CD8-positive, alpha-beta T cell (primary cell): ENCODE measurements at regions of chr4 and their contacts with region 1.

Region 1: GRCh38 chr4:157992038-157992705 is 180.7 kb downstream of the GASK1B start:
- DNase-seq: peak in 3 of 9 experiments; percentile 7 to 54 (median 44)
- ATAC-seq: no peak
- H3K4me3 ChIP-seq: no peak overlapping the region
- H3K4me3 Mint-ChIP-seq: no peak overlapping the region
- H3K27ac ChIP-seq: no peak overlapping the region
- H3K27ac Mint-ChIP-seq: no peak overlapping the region
- H3K4me1 ChIP-seq: no peaks in the 10 kb centered on the region
- H3K4me1 Mint-ChIP-seq: no peaks in the 10 kb centered on the region
- H3K27me3 ChIP-seq: no peaks in the 10 kb centered on the region
- H3K27me3 Mint-ChIP-seq: peaks cover 2% of the 10 kb centered on the region
- CTCF ChIP-seq: peak; percentile 56

Region 2: DNA sequence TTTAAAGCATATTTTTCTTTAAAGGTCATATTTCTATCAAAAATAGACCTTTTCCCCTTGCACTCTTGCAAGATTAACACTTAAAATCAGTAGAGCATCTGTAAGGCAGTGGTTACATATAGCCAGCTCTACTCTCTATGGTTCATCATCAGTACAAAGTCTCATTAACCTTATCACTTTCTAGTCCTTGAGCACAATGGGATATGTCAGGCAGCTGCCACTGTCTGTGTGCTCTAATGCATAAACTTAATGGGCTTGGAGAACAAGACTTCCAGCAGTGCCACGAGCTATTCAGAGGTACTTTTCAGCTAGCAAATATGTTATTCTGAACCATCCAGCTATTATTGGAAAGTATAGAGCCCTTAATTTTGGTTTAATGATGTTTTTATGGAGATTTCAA is 213.1 kb before region 1 on chr4:
- CTCF ChIA-PET with region 1: no interaction called
- POLR2A ChIA-PET with region 1: no interaction called
- intact Hi-C with region 1: no loop called
- DNase-seq: no peak
- ATAC-seq: no peak
- H3K4me3 ChIP-seq: no peak overlapping the region
- H3K4me3 Mint-ChIP-seq: no peak overlapping the region
- H3K27ac ChIP-seq: no peak overlapping the region
- H3K27ac Mint-ChIP-seq: no peak overlapping the region
- H3K4me1 ChIP-seq: no peaks in the 10 kb centered on the region
- H3K4me1 Mint-ChIP-seq: no peaks in the 10 kb centered on the region
- H3K27me3 ChIP-seq: no peaks in the 10 kb centered on the region
- H3K27me3 Mint-ChIP-seq: no peaks in the 10 kb centered on the region
- CTCF ChIP-seq: no peak

Region 3: DNA sequence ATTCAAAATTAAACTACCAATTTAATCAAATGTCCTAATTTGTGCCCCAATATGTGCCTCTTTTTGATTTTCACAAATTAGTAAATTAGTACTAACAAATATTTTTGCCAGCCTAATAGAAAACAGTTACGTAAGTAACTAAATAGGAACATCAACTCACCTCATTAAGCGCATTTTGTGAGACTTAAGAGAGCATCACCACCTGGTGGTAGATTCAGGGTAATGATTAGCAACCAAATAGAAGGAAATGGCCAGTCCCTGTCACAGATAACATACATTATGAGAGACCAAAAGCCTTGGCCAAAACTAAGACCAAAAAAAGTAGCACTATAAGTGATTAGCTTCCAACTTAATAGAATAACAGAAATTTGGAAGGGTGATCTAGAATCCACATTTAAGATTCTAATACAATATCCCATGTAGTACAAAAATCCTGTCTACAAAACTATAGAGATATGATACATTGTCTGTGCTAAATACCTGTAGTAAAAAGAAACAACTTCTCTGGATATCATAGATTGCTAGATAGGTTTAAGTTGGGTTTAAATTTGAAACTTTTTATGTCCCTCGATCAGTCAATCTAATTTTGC is 632.8 kb after region 1 on chr4:
- CTCF ChIA-PET with region 1: no interaction called
- POLR2A ChIA-PET with region 1: no interaction called
- intact Hi-C with region 1: loop called in 1 of 2 experiments (anchors 5 kb)
- DNase-seq: peak in 2 of 9 experiments; percentile 31 to 42
- ATAC-seq: no peak
- H3K4me3 ChIP-seq: no peak overlapping the region
- H3K4me3 Mint-ChIP-seq: no peak overlapping the region
- H3K27ac ChIP-seq: no peak overlapping the region
- H3K27ac Mint-ChIP-seq: no peak overlapping the region
- H3K4me1 ChIP-seq: no peaks in the 10 kb centered on the region
- H3K4me1 Mint-ChIP-seq: no peaks in the 10 kb centered on the region
- H3K27me3 ChIP-seq: no peaks in the 10 kb centered on the region
- H3K27me3 Mint-ChIP-seq: peaks cover 11% of the 10 kb centered on the region
- CTCF ChIP-seq: peak; percentile 44

Region 4: GRCh38 chr4:158850800-158851644 is 858.9 kb after region 1 on chr4:
- CTCF ChIA-PET with region 1: no interaction called
- POLR2A ChIA-PET with region 1: no interaction called
- intact Hi-C with region 1: loop called in 1 of 2 experiments (anchors 5 kb)
- DNase-seq: peak in 2 of 9 experiments; percentile 38 to 55
- ATAC-seq: peak; percentile 38
- H3K4me3 ChIP-seq: no peak overlapping the region
- H3K4me3 Mint-ChIP-seq: no peak overlapping the region
- H3K27ac ChIP-seq: no peak overlapping the region
- H3K27ac Mint-ChIP-seq: no peak overlapping the region
- H3K4me1 ChIP-seq: no peaks in the 10 kb centered on the region
- H3K4me1 Mint-ChIP-seq: peaks cover 5% of the 10 kb centered on the region
- H3K27me3 ChIP-seq: no peaks in the 10 kb centered on the region
- H3K27me3 Mint-ChIP-seq: no peaks in the 10 kb centered on the region
- CTCF ChIP-seq: peak; percentile 74

Region 5: DNA sequence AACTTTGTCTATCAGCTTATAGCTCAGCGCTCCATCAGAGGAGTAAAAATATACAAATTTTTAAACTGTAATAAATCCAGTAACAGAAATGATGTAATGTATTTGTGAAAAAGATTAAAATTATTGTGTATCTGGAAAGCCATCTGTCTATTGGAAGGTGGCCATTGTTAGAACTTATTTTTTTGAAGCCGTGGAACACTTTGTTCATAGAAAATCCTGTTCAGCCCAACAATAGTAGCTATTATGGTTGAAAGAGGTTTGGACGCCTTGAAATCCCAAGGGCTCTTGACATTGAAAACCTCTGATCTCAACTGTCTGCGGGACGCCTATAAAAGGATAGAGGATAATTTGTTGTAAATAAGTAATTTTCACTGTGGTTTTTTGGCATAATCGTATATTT is 1209.0 kb after region 1 on chr4:
- CTCF ChIA-PET with region 1: no interaction called
- POLR2A ChIA-PET with region 1: no interaction called
- intact Hi-C with region 1: loop called (anchors 5 kb)
- DNase-seq: no peak
- ATAC-seq: no peak
- H3K4me3 ChIP-seq: no peak overlapping the region
- H3K4me3 Mint-ChIP-seq: no peak overlapping the region
- H3K27ac ChIP-seq: no peak overlapping the region
- H3K27ac Mint-ChIP-seq: no peak overlapping the region
- H3K4me1 ChIP-seq: no peaks in the 10 kb centered on the region
- H3K4me1 Mint-ChIP-seq: peaks cover 12% of the 10 kb centered on the region
- H3K27me3 ChIP-seq: no peaks in the 10 kb centered on the region
- H3K27me3 Mint-ChIP-seq: no peaks in the 10 kb centered on the region
- CTCF ChIP-seq: no peak